ENCODE measurements at regions of chr5 and their contacts with region 1.

Region 1: DNA sequence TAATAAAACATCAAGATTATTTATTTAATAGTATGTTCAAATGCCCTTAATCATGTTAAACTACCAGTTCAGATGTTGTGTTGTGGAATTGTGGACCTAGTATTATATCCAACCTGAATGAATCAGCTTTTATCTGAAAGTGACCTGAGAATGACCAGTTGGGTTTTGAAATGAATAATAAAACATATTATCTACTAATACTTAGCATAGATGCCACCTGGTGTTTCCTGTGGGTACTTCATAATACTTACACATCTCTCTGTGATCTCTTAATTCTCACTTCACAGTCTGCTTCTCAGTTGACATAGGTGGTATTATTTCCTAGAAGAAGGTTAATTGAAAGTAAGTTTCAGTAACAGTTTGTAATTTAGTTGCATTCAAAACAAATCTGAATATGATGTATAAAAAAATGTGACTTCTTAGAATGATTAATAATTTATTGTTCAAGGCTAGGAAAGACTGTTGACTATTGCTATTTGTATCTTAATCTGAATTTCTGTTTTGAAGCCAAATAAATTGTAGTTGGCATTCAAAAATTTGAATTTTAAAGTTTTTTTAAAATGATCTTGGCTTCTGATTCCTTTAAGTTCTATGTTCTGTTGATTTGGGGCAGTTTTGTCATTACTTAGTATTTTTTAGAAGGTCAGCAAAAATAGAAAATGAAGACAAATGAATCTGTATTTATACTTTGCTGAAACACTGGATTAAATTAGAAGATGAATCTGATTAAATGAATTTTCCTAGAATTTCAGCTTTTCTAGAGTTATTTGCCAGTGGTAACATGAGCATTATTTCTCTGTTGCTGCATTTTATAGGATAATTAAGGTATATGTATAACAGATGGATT is 48.2 kb downstream of the KIF2A start:
- DNase-seq: peak; percentile 64
- H3K4me3 Mint-ChIP-seq: no peak overlapping the region
- H3K27ac Mint-ChIP-seq: no peak overlapping the region
- H3K4me1 Mint-ChIP-seq: no peaks in the 10 kb centered on the region
- H3K27me3 Mint-ChIP-seq: no peaks in the 10 kb centered on the region
- CTCF ChIP-seq: peak; percentile 50

Region 2: GRCh38 chr5:62305715-62306322 is 48.4 kb before region 1 on chr5 and contains the start of gene KIF2A:
- CTCF ChIA-PET with region 1: interaction called, 5 read pairs
- POLR2A ChIA-PET with region 1: interaction called, 7 read pairs
- intact Hi-C with region 1: loop called (anchors 5 kb)
- DNase-seq: peak; percentile 94
- H3K4me3 Mint-ChIP-seq: peak within 1 kb of the TSS; percentile 91
- H3K27ac Mint-ChIP-seq: peak within 1 kb of the TSS; percentile 93
- H3K4me1 Mint-ChIP-seq: peaks cover 13% of the 10 kb centered on the region
- H3K27me3 Mint-ChIP-seq: no peaks in the 10 kb centered on the region
- CTCF ChIP-seq: no peak
- total RNA-seq, gene KIF2A: 45.0 and 61.0 TPM in 2 replicates

Measured in MCF 10A (cell line).